Transverse colon (tissue), 4 donors: ENCODE measurements at regions of chr1 and their contacts with region 1.

Region 1: DNA sequence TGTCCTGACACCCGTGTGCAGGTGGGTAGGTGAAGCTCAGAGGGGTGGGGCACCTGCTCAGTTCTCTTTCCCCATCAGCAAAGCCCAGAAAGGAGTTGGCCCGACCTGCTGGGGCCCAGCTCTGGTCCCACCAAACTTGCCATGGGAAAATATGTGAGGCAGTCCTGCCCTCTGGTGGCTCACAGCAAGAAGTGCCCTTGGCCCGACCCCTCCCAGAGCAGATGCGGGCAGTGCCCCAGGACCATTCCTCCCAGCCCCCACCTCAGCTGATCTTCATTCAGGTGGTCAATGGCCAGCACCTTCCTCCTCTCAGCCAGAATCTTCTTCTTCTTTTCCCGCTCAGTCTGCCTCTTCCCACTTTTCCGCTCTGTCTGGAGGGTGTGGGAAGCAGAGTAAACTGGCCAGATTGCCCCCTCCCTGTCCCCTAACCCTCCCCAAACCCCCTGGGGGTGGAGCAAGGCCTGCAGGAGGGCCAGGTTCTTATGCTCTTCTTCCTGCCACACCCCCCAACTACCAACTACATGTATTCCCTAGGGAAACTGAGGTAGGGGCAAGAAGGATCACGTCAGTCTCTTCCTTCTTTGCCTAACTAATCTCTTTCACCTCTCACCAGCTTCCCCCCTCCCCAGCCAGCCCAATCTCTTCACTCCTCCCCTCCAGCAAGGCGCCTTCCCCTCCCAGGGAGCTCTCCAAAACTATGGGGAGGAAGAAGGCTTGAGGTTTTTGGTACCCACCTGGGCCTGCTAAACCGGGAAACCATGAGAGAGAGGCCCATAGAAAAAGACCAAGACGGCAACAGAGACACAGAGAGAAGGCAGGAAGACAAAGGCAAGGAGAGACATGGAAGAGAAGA is 15.6 kb downstream of the TNNT2 start:
- DNase-seq: peak; percentile 27
- H3K4me3 ChIP-seq: no peak overlapping the region
- H3K27ac ChIP-seq: no peak overlapping the region
- H3K4me1 ChIP-seq: no peaks in the 10 kb centered on the region
- H3K27me3 ChIP-seq: no peaks in the 10 kb centered on the region
- CTCF ChIP-seq: peak; percentile 62 to 88 (median 75)
- EP300 ChIP-seq: no peak
- POLR2A ChIP-seq: no peak

Region 2: GRCh38 chr1:201254625-201255506 is 107.0 kb before region 1 on chr1:
- in situ Hi-C with region 1: loop called in 3 of 4 experiments (anchors 10 to 25 kb)
- intact Hi-C with region 1: loop called (anchors 5 kb)
- DNase-seq: peak; percentile 69
- H3K4me3 ChIP-seq: no peak overlapping the region
- H3K27ac ChIP-seq: no peak overlapping the region
- H3K4me1 ChIP-seq: peaks cover 2 to 6% (median 5%) of the 10 kb centered on the region in 4 donors
- H3K27me3 ChIP-seq: peaks cover 11% of the 10 kb centered on the region
- CTCF ChIP-seq: peak; percentile 95 to 99 (median 98)
- EP300 ChIP-seq: no peak
- POLR2A ChIP-seq: no peak

Region 3: GRCh38 chr1:201268604-201269151 is 93.2 kb before region 1 on chr1:
- in situ Hi-C with region 1: loop called in 3 of 4 experiments (anchors 10 to 25 kb)
- intact Hi-C with region 1: no loop called
- DNase-seq: no peak
- H3K4me3 ChIP-seq: no peak overlapping the region
- H3K27ac ChIP-seq: no peak overlapping the region
- H3K4me1 ChIP-seq: peaks cover 0 to 4% (median 0%) of the 10 kb centered on the region in 4 donors
- H3K27me3 ChIP-seq: no peaks in the 10 kb centered on the region
- CTCF ChIP-seq: no peak
- EP300 ChIP-seq: no peak
- POLR2A ChIP-seq: no peak

Region 4: DNA sequence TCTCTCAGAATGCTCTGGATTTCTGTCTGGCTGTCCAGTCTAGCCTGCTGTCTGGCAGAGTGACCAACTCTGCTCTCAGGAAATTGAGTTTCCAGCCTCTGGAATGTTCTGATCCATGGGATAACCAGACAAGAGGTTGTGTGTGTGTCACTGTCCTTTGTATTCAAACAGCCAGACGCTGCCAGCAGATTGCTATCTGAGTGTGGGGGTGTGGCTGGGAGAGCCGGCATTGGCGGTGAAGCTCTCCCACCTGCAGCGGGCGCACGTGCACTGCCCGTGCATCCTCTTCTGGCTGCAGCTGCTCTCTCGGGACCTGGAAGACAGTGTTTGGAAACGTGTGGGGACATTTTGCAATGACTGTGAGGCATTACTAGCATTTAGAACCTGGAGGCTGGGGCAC is 52.5 kb before region 1 on chr1:
- in situ Hi-C with region 1: no loop called
- intact Hi-C with region 1: no loop called
- DNase-seq: peak; percentile 82
- H3K4me3 ChIP-seq: no peak overlapping the region
- H3K27ac ChIP-seq: no peak overlapping the region
- H3K4me1 ChIP-seq: peaks cover 8 to 28% (median 24%) of the 10 kb centered on the region in 4 donors
- H3K27me3 ChIP-seq: no peaks in the 10 kb centered on the region
- CTCF ChIP-seq: peak in 2 of 5 experiments; percentile 8 to 11
- EP300 ChIP-seq: no peak
- POLR2A ChIP-seq: no peak

Region 5: GRCh38 chr1:201570886-201571624 is 209.2 kb after region 1 on chr1:
- in situ Hi-C with region 1: no loop called
- intact Hi-C with region 1: no loop called
- DNase-seq: no peak
- H3K4me3 ChIP-seq: no peak overlapping the region
- H3K27ac ChIP-seq: peak overlapping the region; percentile 10 to 64 (median 23)
- H3K4me1 ChIP-seq: peaks cover 0 to 9% (median 0%) of the 10 kb centered on the region in 4 donors
- H3K27me3 ChIP-seq: no peaks in the 10 kb centered on the region
- CTCF ChIP-seq: no peak
- EP300 ChIP-seq: no peak
- POLR2A ChIP-seq: no peak